A549 (cell line): ENCODE measurements at regions of chr15 and their contacts with region 1.

Region 1: GRCh38 chr15:57861036-57861638 is 154.6 kb downstream of the POLR2M start:
- DNase-seq: peak; percentile 28 to 74
- ATAC-seq: peak; percentile 28 to 78; a peak in 3 of 6 replicates
- H3K4me3 ChIP-seq: no peak overlapping the region
- H3K27ac ChIP-seq: no peak overlapping the region
- H3K4me1 ChIP-seq: no peaks in the 10 kb centered on the region
- CTCF ChIP-seq: peak; percentile 94
- EP300 ChIP-seq: no peak
- POLR2A ChIP-seq: no peak
- RAD21 ChIP-seq: peak; percentile 63 to 73

Region 2: GRCh38 chr15:57064033-57064432 is 797.1 kb before region 1 on chr15:
- CTCF ChIA-PET with region 1: no interaction called
- POLR2A ChIA-PET with region 1: no interaction called
- DNase-seq: no peak
- ATAC-seq: no peak
- H3K4me3 ChIP-seq: no peak overlapping the region
- H3K27ac ChIP-seq: no peak overlapping the region
- H3K4me1 ChIP-seq: peaks cover 33% of the 10 kb centered on the region
- CTCF ChIP-seq: no peak
- EP300 ChIP-seq: no peak
- POLR2A ChIP-seq: no peak
- RAD21 ChIP-seq: no peak

Region 3: GRCh38 chr15:57619746-57620145 is 241.4 kb before region 1 on chr15:
- CTCF ChIA-PET with region 1: no interaction called
- POLR2A ChIA-PET with region 1: no interaction called
- DNase-seq: peak in 1 of 2 experiments; percentile 21
- ATAC-seq: peak; percentile 73 to 82
- H3K4me3 ChIP-seq: no peak overlapping the region
- H3K27ac ChIP-seq: no peak overlapping the region
- H3K4me1 ChIP-seq: no peaks in the 10 kb centered on the region
- CTCF ChIP-seq: no peak
- EP300 ChIP-seq: no peak
- POLR2A ChIP-seq: no peak
- RAD21 ChIP-seq: no peak

Region 4: GRCh38 chr15:57667171-57667849 is 193.8 kb before region 1 on chr15:
- CTCF ChIA-PET with region 1: interaction called, 62 read pairs
- POLR2A ChIA-PET with region 1: no interaction called
- DNase-seq: peak; percentile 65 to 75
- ATAC-seq: peak; percentile 82 to 92
- H3K4me3 ChIP-seq: no peak overlapping the region
- H3K27ac ChIP-seq: no peak overlapping the region
- H3K4me1 ChIP-seq: peaks cover 18% of the 10 kb centered on the region
- CTCF ChIP-seq: peak; percentile 68
- EP300 ChIP-seq: no peak
- POLR2A ChIP-seq: no peak
- RAD21 ChIP-seq: peak; percentile 78 to 80

Region 5: GRCh38 chr15:57743424-57743823 is 117.7 kb before region 1 on chr15:
- CTCF ChIA-PET with region 1: interaction called, 126 read pairs
- POLR2A ChIA-PET with region 1: no interaction called
- DNase-seq: peak in 1 of 2 experiments; percentile 27
- ATAC-seq: peak; percentile 57 to 67; a peak in 5 of 6 replicates
- H3K4me3 ChIP-seq: no peak overlapping the region
- H3K27ac ChIP-seq: no peak overlapping the region
- H3K4me1 ChIP-seq: no peaks in the 10 kb centered on the region
- CTCF ChIP-seq: 0 out of 3 replicates have a peak, but pooled peaks have one; percentile 16
- EP300 ChIP-seq: no peak
- POLR2A ChIP-seq: no peak
- RAD21 ChIP-seq: peak; percentile 13 to 48; a peak in 1 of 5 replicates

Region 6: DNA sequence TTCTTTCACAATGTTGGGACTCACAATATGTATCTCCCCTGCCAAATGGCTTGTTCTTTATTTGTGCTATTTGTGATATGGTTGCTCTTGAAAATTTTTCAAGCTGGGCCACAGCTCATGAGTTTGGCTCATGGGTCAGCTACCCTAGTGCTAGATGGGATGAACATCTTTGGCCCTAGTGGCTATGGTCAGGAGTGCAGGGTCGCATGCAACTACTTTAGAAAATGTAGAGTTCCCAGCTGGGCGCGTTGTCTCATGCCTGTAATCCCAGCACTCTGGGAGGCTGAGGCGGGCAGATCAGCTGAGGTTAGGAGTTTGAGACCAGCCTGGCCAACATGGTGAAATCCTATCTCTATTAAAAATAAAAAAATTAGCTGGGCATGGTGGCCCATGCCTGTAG is 98.8 kb before region 1 on chr15:
- CTCF ChIA-PET with region 1: interaction called, 11 read pairs
- POLR2A ChIA-PET with region 1: no interaction called
- DNase-seq: no peak
- ATAC-seq: peak in 1 of 2 experiments; percentile 72; a peak in 3 of 6 replicates
- H3K4me3 ChIP-seq: no peak overlapping the region
- H3K27ac ChIP-seq: no peak overlapping the region
- H3K4me1 ChIP-seq: no peaks in the 10 kb centered on the region
- CTCF ChIP-seq: no peak
- EP300 ChIP-seq: no peak
- POLR2A ChIP-seq: no peak
- RAD21 ChIP-seq: no peak

Region 7: GRCh38 chr15:57806003-57806402 is 55.1 kb before region 1 on chr15:
- CTCF ChIA-PET with region 1: no interaction called
- POLR2A ChIA-PET with region 1: no interaction called
- DNase-seq: no peak
- ATAC-seq: no peak
- H3K4me3 ChIP-seq: no peak overlapping the region
- H3K27ac ChIP-seq: no peak overlapping the region
- H3K4me1 ChIP-seq: no peaks in the 10 kb centered on the region
- CTCF ChIP-seq: no peak
- EP300 ChIP-seq: no peak
- POLR2A ChIP-seq: no peak
- RAD21 ChIP-seq: no peak

Region 8: DNA sequence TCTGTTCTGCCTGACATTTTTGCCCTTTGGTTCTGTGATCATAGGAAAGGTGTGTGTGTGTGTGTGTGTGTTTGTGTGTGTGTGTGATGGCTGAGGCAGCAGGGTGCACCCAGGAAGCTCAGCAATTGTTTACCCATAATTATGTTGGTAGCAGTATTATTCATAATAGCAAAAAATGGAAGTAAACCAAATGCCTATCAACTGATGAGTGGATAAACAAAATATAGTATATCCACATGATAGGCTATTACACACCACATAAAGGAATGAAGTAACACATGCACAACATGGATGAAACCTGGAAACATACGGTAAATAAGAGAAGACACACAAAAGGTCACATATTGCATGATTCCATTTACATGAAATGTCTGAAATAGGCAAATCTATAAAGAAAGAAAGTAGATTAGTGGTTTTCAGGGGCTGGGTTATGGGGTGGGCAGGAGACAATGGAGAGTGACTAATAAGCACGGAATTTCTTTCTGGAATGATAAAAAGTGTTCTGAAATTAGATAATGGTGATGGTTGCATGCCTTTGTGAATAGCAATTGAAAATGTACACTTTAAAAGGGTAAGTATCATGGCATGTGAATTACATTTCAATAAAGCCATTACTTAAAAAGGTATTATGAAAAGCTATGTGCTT is 12.6 kb after region 1 on chr15:
- CTCF ChIA-PET with region 1: interaction called, 49 read pairs
- POLR2A ChIA-PET with region 1: interaction called, 3 read pairs
- DNase-seq: no peak
- ATAC-seq: no peak
- H3K4me3 ChIP-seq: no peak overlapping the region
- H3K27ac ChIP-seq: no peak overlapping the region
- H3K4me1 ChIP-seq: no peaks in the 10 kb centered on the region
- CTCF ChIP-seq: no peak
- EP300 ChIP-seq: no peak
- POLR2A ChIP-seq: no peak
- RAD21 ChIP-seq: no peak

Region 9: DNA sequence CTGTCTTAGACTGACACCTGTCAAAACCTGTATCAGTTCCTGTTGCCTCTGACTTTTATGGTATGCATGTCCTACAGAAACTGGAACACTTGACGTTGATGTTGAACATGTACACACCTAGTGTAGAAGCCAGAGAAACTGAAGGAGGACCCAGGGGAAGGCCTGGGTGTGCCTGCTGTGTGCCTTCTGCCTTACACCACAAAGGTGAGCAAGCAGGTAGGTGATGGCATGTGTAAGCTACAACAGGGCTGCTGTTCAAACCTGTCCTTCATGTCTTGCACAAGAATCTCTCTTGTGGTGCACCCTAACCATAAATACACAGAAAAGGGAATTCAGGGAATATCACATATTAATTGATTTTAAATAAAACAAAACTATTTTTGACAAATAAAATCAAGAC is 263.4 kb after region 1 on chr15:
- CTCF ChIA-PET with region 1: no interaction called
- POLR2A ChIA-PET with region 1: no interaction called
- DNase-seq: no peak
- ATAC-seq: no peak
- H3K4me3 ChIP-seq: no peak overlapping the region
- H3K27ac ChIP-seq: no peak overlapping the region
- H3K4me1 ChIP-seq: no peaks in the 10 kb centered on the region
- CTCF ChIP-seq: no peak
- EP300 ChIP-seq: no peak
- POLR2A ChIP-seq: no peak
- RAD21 ChIP-seq: no peak